ENCODE measurements at regions of chr14 and their contacts with region 1.

Region 1: GRCh38 chr14:77076113-77076631 is 21.9 kb upstream of the CIPC start:
- DNase-seq: no peak
- CTCF ChIP-seq: no peak

Region 2: DNA sequence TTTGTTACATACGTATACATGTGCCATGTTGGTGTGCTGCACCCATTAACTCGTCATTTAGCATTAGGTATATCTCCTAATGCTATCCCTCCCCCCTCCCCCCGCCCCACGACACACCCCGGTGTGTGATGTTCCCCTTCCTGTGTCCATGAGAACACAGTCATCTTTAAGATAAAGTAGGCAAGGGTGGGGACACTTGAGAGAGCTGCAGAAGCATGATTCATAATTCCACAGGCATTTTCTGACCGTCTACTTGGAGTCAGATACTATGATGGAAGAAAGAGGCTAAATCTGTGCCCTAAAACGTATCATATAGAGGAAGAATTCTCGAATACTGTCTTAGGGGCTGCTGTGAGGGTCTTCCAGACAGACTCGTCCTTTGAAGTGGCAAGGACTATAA is 460.8 kb before region 1 on chr14:
- in situ Hi-C with region 1: no loop called
- DNase-seq: no peak
- CTCF ChIP-seq: no peak

Region 3: DNA sequence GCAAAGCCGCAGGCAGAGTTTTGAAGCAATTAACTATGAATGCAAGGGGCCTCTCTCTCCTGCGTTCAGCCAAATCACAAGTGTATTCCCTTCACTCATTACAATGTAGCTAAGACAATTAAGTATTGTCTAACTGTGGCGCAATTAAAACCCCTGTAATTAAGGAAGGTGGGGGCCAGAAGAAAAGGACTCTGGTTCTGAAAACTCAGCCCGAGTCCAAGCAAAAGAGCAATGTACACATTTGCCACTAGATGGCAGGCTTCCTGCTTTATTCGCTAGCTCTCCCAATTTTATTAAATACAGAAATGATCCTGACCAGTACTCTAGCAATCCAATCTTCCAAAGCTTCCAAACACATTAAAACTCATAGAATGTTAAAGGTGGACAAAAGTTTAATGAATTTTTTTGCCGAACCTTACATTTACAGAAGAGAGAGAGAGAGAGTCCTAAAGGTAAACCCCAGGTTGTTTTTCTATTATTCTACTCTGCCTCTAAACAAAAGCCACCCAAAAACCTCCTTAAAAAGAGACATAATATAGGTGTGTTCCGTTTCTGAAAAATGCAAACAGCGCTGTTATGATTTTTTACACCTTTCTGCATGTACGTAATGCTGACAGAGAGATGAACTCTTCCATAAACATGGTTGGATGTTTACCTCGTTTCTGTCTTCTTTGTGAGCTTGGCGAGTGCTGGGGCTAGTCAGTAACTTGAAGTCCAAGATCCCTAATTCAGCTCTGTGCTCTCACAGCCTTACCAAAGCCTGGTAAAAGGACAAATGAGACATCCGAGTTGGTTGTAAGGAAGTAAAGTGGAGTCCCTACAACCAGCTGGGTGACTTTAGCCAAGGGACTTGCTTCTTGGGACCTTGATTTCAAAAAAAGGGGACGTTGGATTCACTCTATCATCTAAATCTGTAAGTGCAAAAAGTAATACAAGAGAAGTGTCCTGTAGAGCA is 365.8 kb before region 1 on chr14:
- in situ Hi-C with region 1: loop called (anchors 10 kb)
- DNase-seq: peak; percentile 71
- CTCF ChIP-seq: peak; percentile 48

Region 4: GRCh38 chr14:76887196-76887595 is 189.0 kb before region 1 on chr14:
- in situ Hi-C with region 1: no loop called
- DNase-seq: no peak
- CTCF ChIP-seq: no peak

Region 5: GRCh38 chr14:77268989-77269600 is 192.9 kb after region 1 on chr14:
- in situ Hi-C with region 1: no loop called
- DNase-seq: peak; percentile 27
- CTCF ChIP-seq: no peak

Region 6: DNA sequence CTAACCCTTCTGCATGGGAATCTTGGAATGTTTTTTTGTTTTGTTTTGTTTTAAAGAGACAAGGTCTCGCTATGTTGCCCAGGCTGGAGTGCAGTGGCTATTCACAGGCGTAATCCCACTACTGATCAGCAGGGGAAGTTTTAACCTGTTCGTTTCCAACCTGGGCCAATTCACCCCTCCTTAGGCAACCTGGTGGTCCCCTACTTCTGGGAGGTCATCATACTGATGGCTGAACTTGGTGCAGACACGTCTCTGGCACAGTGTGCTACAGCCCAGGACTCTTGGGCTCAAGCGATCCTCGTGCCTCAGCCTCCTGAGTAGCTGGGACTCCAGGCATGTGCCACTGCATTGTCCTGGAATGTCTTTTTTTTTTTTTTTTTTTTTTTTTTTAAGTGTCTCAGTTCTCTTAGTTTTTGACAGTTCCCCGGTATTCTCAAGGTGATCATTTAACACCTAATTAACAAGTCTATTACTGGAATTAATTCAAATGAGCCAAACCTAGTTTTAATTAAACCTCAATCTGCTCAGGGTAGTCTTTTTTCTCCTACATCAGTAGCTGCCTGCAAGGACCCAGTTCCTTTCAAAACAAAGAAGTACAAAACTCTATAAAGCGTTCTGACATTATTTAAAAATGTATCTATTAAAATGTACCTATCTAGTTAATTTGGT is 471.5 kb after region 1 on chr14:
- in situ Hi-C with region 1: no loop called
- DNase-seq: no peak
- CTCF ChIP-seq: no peak

Measured in GM13976 (cell line).